ENCODE measurements at regions of chr18 and their contacts with region 1.

Region 1: DNA sequence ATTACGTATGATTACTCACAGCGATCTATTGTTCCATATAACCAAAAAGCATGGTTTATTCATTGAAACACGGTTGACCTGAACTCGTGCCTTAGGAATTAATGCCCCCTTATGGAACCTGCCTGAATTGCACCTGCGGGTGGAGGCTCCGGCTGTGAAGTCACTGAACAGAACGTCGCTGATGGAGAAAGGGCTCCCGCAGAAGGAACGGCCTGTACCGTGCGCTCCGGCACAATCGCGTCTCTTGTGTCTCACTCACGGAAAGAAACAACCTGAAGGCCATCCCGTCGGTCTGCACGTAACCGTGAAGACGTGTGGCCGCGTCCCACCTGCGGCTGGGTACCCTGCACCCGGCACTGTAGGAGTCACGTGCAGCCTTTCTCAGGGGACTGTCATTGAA is 133.1 kb downstream of the NFATC1 start:
- DNase-seq: peak; percentile 57
- H3K4me3 Mint-ChIP-seq: no peak overlapping the region
- H3K27ac Mint-ChIP-seq: no peak overlapping the region
- H3K4me1 Mint-ChIP-seq: peaks cover 19% of the 10 kb centered on the region
- H3K27me3 Mint-ChIP-seq: no peaks in the 10 kb centered on the region

Region 2: GRCh38 chr18:79378542-79379250 is 150.2 kb before region 1 on chr18:
- intact Hi-C with region 1: loop called (anchors 1 kb)
- DNase-seq: peak; percentile 71
- H3K4me3 Mint-ChIP-seq: no peak overlapping the region
- H3K27ac Mint-ChIP-seq: no peak overlapping the region
- H3K4me1 Mint-ChIP-seq: peaks cover 11% of the 10 kb centered on the region
- H3K27me3 Mint-ChIP-seq: no peaks in the 10 kb centered on the region

Region 3: GRCh38 chr18:79429785-79430281 is 99.0 kb before region 1 on chr18:
- intact Hi-C with region 1: no loop called
- DNase-seq: no peak
- H3K4me3 Mint-ChIP-seq: no peak overlapping the region
- H3K27ac Mint-ChIP-seq: no peak overlapping the region
- H3K4me1 Mint-ChIP-seq: peaks cover 3% of the 10 kb centered on the region
- H3K27me3 Mint-ChIP-seq: no peaks in the 10 kb centered on the region

Region 4: DNA sequence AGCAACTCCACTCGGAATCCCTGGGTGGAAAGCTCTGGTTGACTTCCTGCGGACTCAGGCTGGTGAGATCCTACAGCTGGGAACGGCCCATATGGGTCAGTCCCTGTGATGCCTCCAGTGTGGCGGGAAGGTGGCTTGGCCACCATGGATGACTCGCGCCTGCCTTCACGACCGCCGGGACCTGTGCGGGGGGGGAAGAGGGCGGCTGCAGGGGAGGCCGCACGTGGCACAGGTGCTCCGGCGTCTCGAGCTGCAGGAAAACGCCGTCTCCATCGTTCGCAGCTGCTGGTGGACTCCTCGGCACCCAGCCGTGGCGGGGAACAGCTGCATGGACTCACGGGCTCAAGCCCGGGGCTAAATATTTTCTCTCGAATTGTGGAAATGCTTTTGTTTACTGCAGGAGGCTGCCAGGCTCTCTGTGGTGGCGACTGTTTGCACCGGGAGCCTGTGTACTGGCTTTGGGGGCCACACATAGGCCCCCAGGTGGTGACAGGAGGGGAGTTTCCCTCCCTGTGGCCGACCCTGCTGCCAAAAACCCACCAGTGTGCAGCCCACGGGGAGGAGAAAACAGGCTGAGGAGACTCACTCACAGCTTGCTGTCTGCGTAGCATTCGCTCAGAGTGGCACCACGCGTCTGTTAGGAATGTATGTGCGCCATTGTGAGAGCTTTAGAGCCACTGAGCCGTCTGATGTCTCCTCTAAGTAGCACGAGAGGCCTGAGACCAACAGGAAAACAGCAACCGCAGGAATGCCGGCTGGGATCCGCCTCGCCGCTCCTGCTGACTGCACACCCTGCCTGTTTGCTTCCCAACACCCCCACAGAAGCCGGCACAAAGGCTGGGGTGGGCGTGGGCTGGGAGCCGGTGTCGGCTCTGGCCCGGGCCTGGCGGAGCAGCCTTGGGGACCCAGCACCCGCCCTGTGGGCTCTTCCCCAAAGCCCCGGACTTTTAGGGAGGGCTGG is 43.9 kb before region 1 on chr18:
- intact Hi-C with region 1: no loop called
- DNase-seq: no peak
- H3K4me3 Mint-ChIP-seq: no peak overlapping the region
- H3K27ac Mint-ChIP-seq: no peak overlapping the region
- H3K4me1 Mint-ChIP-seq: no peaks in the 10 kb centered on the region
- H3K27me3 Mint-ChIP-seq: no peaks in the 10 kb centered on the region

Region 5: DNA sequence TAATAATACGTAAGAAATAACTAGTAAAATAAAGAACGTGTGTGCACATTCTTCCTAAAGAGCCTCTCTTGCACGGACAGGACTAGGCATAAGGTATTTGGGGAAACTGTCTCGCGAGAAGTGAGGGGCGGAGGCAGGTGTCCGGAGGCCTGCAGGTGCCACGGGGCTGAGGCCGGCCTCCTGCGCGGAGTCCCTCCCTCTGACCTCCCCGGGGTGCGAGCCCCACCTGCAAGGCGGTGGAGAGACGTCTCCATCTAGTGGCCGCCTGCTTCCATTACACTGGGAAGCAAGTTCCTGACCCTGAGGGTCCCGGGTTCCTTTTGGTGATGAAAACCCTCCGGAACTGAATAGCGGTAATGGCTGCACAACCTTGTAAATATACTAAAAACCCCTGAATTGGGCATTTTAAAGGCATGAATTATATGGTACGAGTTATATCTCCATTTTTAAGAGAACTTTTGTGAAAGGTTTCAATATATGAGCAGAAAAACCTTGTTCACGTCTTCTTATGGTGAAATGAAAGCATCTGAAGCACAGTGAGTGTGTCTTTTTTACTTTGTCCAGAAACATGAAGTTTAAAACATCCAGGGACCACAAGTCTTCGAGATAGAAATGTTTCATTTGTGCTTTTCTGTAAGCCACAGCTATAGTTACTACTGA is 115.3 kb after region 1 on chr18:
- intact Hi-C with region 1: loop called (anchors 2 kb)
- DNase-seq: peak; percentile 57
- H3K4me3 Mint-ChIP-seq: no peak overlapping the region
- H3K27ac Mint-ChIP-seq: no peak overlapping the region
- H3K4me1 Mint-ChIP-seq: no peaks in the 10 kb centered on the region
- H3K27me3 Mint-ChIP-seq: peaks cover 7% of the 10 kb centered on the region

Region 6: DNA sequence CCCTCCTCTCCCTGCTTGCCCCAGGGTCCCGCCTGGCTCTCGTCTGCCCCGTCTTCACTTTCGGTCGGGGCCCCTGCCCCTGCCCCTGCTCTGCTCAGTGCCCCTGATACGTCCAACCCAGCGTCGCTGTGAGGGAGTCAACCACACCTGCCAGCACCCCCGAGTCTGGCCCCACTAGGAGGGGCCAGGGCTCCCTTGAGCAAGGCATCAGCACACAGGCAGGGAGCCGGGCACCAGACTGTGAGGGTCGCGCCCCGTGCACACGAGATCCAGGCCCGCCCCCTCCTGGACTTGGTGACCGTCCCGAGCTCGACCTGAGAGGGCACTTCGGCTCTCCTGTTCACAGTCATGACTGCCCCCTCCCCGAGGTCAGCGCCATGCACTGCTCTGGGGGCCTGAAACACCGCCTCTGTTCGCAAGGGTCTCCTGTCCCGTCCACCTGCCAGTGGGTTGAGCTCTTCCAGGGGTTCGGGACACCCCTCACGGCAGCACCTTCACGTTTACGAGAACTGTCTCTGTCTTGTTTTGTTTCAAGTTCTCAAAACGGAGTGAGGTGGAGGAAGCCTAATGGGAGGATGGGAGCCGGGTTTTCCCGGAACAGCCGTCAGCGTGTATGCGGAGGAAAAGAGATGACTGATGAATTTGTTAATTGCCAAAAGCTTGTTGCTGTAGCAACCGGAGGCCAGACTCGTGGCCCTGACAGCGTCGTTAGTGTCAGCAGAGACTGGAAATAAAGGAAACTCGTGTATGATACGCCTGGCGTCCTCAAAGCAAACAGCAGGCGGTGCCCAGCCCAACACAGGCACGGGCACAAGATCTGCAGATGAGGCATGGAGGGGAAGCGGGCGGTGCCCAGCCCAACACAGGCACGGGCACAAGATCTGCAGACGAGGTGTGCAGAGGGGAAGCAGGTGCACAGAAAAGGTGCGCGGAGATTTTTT is 220.7 kb after region 1 on chr18:
- intact Hi-C with region 1: no loop called
- DNase-seq: no peak
- H3K4me3 Mint-ChIP-seq: no peak overlapping the region
- H3K27ac Mint-ChIP-seq: no peak overlapping the region
- H3K4me1 Mint-ChIP-seq: no peaks in the 10 kb centered on the region
- H3K27me3 Mint-ChIP-seq: no peaks in the 10 kb centered on the region